Gastrocnemius medialis (tissue), 4 donors: ENCODE measurements at regions of chr1 and their contacts with region 1.

Region 1: GRCh38 chr1:119647734-119648619 is at the start of gene ZNF697:
- DNase-seq: peak; percentile 96 to 97
- ATAC-seq: peak; percentile 99
- H3K4me3 ChIP-seq: peak within 1 kb of the TSS; percentile 71 to 95 (median 83)
- H3K27ac ChIP-seq: peak within 1 kb of the TSS; percentile 82 to 93 (median 88)
- H3K4me1 ChIP-seq: peaks cover 5 to 10% of the 10 kb centered on the region in 2 donors
- H3K27me3 ChIP-seq: no peaks in the 10 kb centered on the region
- CTCF ChIP-seq: peak; percentile 16 to 52 (median 44)
- POLR2A ChIP-seq: peak; percentile 72 to 76
- total RNA-seq, gene ZNF697: 1.4 to 3.1 (median 2.9) TPM

Region 2: DNA sequence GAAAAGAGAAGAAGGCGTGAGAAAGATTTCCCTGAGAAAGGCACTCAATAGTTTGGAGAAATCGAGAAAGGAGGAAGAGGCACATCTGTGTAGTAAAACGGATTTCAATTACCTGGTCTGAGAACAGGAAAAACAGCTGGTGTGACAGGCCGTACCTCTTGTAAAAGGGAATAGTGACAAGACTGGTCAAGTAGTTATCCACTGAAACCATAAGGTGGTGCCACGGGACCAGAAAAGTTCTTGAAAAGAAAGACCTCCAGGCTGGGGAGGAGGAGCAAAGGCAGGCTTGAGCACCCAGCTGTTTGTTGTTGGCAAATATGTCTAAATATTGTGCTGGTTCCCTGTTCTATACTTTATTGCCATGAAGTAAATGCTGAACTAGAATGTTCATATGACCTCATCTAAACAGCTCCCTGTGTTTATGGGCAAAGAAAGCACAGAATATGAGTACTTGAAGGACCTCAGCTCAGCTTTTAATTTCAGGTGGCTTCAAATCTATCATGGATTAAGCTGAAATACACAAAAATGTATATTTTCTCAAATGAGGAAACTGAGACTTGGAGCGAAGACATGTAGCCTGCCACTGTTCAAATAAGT is 275.4 kb before region 1 on chr1:
- in situ Hi-C with region 1: no loop called
- intact Hi-C with region 1: no loop called
- DNase-seq: no peak
- ATAC-seq: no peak
- H3K4me3 ChIP-seq: no peak overlapping the region
- H3K27ac ChIP-seq: no peak overlapping the region
- H3K4me1 ChIP-seq: no peaks in the 10 kb centered on the region
- H3K27me3 ChIP-seq: no peaks in the 10 kb centered on the region
- CTCF ChIP-seq: no peak
- POLR2A ChIP-seq: no peak

Region 3: DNA sequence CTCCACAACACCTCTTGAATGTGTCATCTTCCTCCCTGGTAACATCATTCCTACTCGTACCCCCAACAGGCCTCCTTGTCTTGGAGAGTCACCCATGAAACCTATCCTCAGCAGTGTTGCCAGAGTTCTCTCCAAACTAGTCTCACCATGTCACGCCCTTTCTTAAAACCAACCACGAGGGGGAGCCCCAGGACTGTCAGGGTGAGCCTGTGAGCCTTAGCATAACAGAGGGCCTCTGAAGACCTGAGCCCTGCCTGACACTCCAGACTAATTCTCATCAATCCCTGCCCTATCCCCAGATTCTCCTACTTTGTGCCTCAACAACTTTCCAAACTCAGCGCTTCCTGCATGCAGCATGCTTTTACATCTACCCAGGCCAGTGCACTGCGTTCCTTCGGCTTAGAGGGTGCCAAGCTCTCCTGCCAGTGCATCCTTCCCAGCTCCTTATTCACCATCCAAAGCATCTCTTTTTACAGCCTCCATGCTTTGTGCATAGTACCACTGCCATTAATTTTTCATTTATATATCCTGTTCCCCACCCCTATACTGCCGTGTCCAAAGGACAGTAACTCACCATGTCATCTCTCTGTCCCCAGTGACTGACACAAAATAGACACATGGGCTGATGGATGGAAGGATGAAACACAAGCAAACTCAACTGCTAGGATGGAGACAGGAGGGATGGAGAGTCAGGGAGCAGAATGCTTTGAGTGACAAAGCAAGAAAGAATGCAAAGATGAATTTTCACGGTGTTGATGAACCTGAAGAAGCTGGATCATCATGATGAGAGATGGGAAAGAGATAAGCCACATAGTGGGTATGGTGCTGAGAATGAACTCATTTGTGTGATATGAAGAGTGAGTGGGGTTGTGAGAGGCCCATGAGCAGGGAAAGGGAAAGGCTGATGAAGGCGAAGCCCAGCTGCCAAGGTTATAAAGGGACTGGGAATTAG is 33.9 kb before region 1 on chr1:
- in situ Hi-C with region 1: no loop called
- intact Hi-C with region 1: loop called (anchors 5 kb)
- DNase-seq: peak; percentile 63 to 77
- ATAC-seq: peak; percentile 89 to 95
- H3K4me3 ChIP-seq: no peak overlapping the region
- H3K27ac ChIP-seq: no peak overlapping the region
- H3K4me1 ChIP-seq: peaks cover 9 to 11% of the 10 kb centered on the region in 2 donors
- H3K27me3 ChIP-seq: no peaks in the 10 kb centered on the region
- CTCF ChIP-seq: peak; percentile 62 to 94 (median 83)
- POLR2A ChIP-seq: no peak

Region 4: DNA sequence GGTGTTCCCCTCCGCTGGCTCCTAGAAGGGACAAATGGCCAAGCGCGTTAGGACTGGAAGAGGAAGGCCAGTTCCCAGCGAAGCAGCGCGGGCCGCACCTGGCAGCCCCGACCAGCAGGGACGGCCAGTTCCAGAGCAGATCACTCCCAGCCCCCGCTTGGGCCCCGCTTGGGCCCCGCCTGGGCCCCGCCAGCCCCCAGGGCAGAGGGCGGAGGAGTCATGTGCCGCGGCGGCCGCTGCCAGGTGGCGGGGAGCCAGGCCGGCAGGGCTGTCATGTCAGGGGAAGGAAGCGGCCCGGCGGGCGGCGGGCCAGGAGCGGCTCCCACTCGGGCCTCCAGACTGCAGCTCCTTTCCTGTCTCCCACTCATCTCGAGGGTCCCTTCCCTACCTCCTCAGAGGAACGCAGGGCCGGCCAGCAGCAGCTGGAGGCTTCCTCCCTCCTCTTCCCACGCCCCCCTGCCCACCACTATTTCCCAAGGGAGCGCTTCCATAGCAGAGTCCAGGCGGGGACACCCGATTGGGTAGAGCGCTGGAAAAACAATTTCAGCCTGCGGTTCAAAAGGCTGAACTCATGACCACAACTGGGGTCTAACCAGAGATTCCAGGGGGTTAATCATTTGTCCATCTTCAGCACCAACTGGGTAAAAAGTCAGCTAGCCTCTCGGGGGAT is 16.4 kb before region 1 on chr1:
- in situ Hi-C with region 1: no loop called
- intact Hi-C with region 1: loop called (anchors 2 kb)
- DNase-seq: peak; percentile 58 to 88
- ATAC-seq: peak; percentile 78 to 88
- H3K4me3 ChIP-seq: peak overlapping the region; percentile 48 to 57 (median 54)
- H3K27ac ChIP-seq: peak overlapping the region; percentile 82 to 87 (median 86)
- H3K4me1 ChIP-seq: peaks cover 47 to 65% of the 10 kb centered on the region in 2 donors
- H3K27me3 ChIP-seq: no peaks in the 10 kb centered on the region
- CTCF ChIP-seq: peak in 1 of 5 experiments; percentile 18
- POLR2A ChIP-seq: no peak

Region 5: DNA sequence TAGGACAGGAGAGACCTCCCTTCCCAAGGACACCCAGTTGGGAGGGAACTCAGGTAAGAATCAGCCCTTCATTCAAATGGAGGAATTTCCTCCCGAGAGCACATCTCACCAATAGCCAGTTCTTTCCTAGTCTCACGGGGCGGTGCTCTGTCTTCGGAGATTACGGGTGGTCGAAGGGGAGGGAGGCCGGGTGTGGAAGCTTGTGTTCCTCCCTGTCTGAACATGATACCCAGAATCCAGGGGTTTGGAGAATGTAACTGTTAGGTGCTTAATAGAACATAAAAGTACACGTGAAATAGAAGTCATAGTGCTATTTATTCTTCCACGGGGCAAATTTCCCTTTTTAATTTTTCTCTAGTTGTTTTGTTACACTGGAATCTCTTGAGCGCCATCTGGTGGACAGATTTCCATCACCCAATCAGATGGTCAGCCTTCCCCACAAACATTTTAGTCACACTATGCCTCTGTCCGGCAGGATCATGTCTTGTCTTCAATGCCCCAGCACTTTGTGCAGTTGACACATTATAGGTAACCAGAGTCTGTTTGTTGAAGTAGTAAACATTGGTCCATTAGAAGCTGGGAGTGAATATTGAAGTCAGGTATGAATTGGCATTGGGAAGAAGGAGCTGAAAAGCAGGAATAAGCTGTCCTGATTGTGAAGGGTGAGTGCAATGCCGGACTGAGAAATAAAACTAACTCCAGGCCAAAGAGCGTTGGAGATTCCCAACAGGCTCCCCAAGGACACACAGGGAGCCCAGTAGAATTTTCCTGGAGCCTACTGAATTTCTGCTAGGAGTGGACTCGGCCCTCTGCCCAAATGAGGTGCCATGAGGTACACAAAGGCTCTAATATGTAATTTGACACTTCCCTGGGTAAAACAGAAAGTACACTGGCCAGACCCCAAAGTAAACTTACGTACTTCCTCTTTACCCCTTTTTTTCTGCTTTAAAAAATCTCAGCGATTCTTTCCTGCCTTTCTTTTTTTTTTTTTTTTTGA is 27.7 kb after region 1 on chr1:
- in situ Hi-C with region 1: no loop called
- intact Hi-C with region 1: loop called (anchors 2 kb)
- DNase-seq: peak; percentile 57 to 71
- ATAC-seq: peak; percentile 83 to 90
- H3K4me3 ChIP-seq: peak overlapping the region; percentile 32 to 46 (median 42)
- H3K27ac ChIP-seq: peak overlapping the region in 1 of 4 donors; percentile 34
- H3K4me1 ChIP-seq: no peaks in the 10 kb centered on the region
- H3K27me3 ChIP-seq: no peaks in the 10 kb centered on the region
- CTCF ChIP-seq: peak; percentile 75 to 90 (median 87)
- POLR2A ChIP-seq: no peak

Region 6: DNA sequence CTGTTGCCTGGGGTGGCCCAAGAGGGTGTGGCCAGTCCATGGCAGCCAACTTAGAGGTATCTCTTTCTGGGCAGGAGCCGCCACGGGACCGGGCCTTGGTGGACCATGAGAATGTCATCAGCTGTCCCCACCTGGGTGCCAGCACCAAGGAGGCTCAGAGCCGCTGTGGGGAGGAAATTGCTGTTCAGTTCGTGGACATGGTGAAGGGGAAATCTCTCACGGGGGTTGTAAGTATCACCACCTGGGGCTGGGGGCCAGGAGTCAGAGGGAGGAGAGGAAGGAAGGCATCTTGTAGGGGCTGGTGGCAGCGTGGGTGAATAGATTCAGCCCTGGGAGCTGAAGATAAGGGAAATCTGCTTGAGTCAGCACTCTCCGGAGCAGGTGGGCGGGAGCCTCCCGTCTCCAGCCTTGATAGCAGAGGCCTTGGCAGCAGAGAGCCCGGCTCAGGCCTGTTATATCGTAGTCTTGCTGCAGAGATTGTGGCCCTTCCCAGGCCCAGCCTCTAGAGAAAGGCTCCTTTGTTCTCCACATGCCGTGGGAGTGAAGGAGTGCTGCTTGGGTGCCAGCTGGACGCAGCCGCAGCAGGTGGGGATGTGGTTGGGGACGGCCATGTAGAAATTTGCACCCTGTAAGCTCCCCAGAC is 89.2 kb after region 1 on chr1:
- in situ Hi-C with region 1: no loop called
- intact Hi-C with region 1: no loop called
- DNase-seq: no peak
- ATAC-seq: no peak
- H3K4me3 ChIP-seq: no peak overlapping the region
- H3K27ac ChIP-seq: no peak overlapping the region
- H3K4me1 ChIP-seq: no peaks in the 10 kb centered on the region
- H3K27me3 ChIP-seq: no peaks in the 10 kb centered on the region
- CTCF ChIP-seq: no peak
- POLR2A ChIP-seq: no peak